ENCODE measurements at regions of chr19 and their contacts with region 1.

Region 1: DNA sequence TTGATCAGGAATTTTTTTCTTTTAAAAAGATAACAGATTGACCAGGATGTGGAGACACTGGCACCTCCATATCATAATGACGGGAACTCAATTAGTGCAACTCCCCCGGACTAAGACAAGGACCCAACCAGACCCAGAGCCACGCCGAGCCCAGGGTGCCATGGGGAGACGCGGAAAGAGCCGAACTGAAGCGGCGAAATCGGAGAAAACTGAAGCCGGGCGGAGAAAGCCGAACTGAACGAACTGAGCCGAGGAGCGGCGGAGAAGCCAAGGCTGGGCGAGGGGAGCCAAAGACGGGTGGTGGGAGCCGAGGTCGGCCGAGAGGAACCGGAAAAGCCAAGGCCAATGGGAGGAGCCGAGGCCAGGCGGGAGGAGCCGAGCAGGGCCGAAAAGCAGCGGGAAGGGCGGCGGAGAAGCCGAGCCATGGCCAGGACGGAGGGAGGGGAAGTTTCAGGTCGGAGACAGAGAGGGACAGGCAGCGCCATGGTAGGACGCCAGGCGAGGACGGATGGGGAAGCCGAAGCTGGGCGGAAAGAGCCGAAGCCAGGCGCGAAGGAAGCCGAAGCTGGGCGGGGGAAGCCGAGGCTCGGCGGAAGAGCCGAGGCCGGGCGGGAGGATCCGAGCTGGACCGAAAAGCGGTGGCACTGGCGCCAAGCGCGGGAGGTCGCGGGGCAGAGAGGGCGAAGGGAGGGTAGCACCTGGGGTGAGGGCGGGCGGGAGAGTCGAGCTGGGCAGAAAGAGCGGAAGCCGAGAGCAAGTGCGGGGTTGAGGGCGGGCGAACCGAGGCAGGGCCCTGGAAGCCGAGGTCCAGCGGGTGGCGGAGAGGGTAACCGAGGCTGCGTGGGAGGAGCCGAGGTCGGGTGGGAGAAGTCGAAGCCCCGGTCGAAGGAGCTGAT is 29.4 kb downstream of the ZNF557 start:
- DNase-seq: peak; percentile 82 to 92 (median 87)
- H3K4me3 ChIP-seq: peak overlapping the region; percentile 57 to 86
- H3K4me3 Mint-ChIP-seq: peak overlapping the region; percentile 84 to 96 (median 92)
- H3K27ac ChIP-seq: peak overlapping the region; percentile 86
- H3K27ac Mint-ChIP-seq: peak overlapping the region; percentile 74 to 98 (median 94)
- H3K4me1 ChIP-seq: peaks cover 23% of the 10 kb centered on the region
- H3K4me1 Mint-ChIP-seq: peaks cover 13 to 40% (median 27%) of the 10 kb centered on the region in 4 donors
- H3K27me3 ChIP-seq: no peaks in the 10 kb centered on the region
- H3K27me3 Mint-ChIP-seq: peaks cover 0 to 3% of the 10 kb centered on the region in 2 donors

Region 2: GRCh38 chr19:7069042-7069903 is 29.7 kb before region 1 on chr19 and contains the start of gene ZNF557:
- CTCF ChIA-PET with region 1: interaction called, 12 read pairs
- POLR2A ChIA-PET with region 1: interaction called, 31 read pairs
- intact Hi-C with region 1: loop called (anchors 1 kb)
- DNase-seq: peak; percentile 99 to 100 (median 99)
- H3K4me3 ChIP-seq: peak within 1 kb of the TSS; percentile 92 to 96
- H3K4me3 Mint-ChIP-seq: peak within 1 kb of the TSS; percentile 92 to 99 (median 96)
- H3K27ac ChIP-seq: peak within 1 kb of the TSS; percentile 74
- H3K27ac Mint-ChIP-seq: peak within 1 kb of the TSS; percentile 89 to 98 (median 95)
- H3K4me1 ChIP-seq: peaks cover 21% of the 10 kb centered on the region
- H3K4me1 Mint-ChIP-seq: peaks cover 11 to 36% (median 18%) of the 10 kb centered on the region in 4 donors
- H3K27me3 ChIP-seq: no peaks in the 10 kb centered on the region
- H3K27me3 Mint-ChIP-seq: no peaks in the 10 kb centered on the region
- total RNA-seq, gene ZNF557: 32.3 to 33.2 TPM

Region 3: GRCh38 chr19:7083076-7083956 is 15.6 kb before region 1 on chr19:
- CTCF ChIA-PET with region 1: interaction called, 4 read pairs
- POLR2A ChIA-PET with region 1: interaction called, 10 read pairs
- intact Hi-C with region 1: no loop called
- DNase-seq: peak in 2 of 5 donors; percentile 10 to 16
- H3K4me3 ChIP-seq: no peak overlapping the region
- H3K4me3 Mint-ChIP-seq: peak overlapping the region in 2 of 8 donors; percentile 5 to 35
- H3K27ac ChIP-seq: no peak overlapping the region
- H3K27ac Mint-ChIP-seq: peak overlapping the region in 1 of 7 donors; percentile 21
- H3K4me1 ChIP-seq: no peaks in the 10 kb centered on the region
- H3K4me1 Mint-ChIP-seq: peaks cover 0 to 1% (median 0%) of the 10 kb centered on the region in 4 donors
- H3K27me3 ChIP-seq: no peaks in the 10 kb centered on the region
- H3K27me3 Mint-ChIP-seq: no peaks in the 10 kb centered on the region

Region 4: GRCh38 chr19:7326105-7326877 is 227.3 kb after region 1 on chr19:
- CTCF ChIA-PET with region 1: interaction called, 5 read pairs
- POLR2A ChIA-PET with region 1: no interaction called
- intact Hi-C with region 1: loop called (anchors 1 kb)
- DNase-seq: peak in 2 of 5 donors; percentile 24 to 37
- H3K4me3 ChIP-seq: no peak overlapping the region
- H3K4me3 Mint-ChIP-seq: no peak overlapping the region
- H3K27ac ChIP-seq: no peak overlapping the region
- H3K27ac Mint-ChIP-seq: no peak overlapping the region
- H3K4me1 ChIP-seq: no peaks in the 10 kb centered on the region
- H3K4me1 Mint-ChIP-seq: no peaks in the 10 kb centered on the region
- H3K27me3 ChIP-seq: no peaks in the 10 kb centered on the region
- H3K27me3 Mint-ChIP-seq: peaks cover 1 to 2% of the 10 kb centered on the region in 2 donors

Region 5: DNA sequence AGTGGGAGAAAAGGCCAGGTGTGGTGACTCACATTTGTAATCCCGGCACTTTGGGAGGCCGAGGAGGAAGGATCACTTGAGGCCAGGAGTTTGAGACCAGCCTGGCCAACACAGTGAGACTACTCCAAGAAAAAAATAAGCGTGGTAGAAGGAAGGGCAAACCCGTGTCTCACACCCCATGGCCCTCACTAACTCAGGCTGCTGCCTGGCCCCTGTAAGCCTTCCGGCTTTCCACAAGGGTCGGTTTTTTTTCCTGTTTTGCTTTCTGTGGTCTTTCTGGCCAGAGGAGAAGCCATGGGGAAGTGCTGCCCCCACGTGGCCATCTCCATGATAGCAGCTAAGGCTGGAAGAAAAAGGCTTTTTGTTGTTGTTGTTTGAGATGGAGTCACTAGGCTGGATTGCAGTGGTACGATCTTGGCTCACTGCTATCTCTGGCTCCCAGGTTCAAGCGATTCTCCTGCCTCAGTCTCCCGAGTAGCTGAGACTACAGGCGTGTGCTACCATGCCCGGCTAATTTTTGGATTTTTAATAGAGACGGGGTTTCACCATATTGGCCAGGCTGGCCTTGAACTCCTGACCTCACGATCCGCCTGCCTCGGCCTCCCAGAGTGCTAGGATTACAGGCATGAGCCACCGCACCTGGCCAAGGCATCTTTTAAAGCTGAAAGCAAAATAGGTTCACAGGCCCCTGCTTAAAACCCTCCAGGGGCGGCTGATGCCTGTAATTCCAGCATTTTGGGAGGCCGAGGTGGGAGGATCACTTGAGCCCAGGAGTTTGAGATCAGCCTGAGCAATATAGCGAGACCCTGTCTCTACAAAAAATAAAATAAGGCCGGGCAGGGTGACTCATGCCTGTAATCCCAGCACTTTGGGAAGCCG is 242.2 kb after region 1 on chr19:
- CTCF ChIA-PET with region 1: interaction called, 21 read pairs
- POLR2A ChIA-PET with region 1: interaction called, 10 read pairs
- intact Hi-C with region 1: loop called (anchors 2 kb)
- DNase-seq: peak; percentile 70 to 81 (median 79)
- H3K4me3 ChIP-seq: no peak overlapping the region
- H3K4me3 Mint-ChIP-seq: peak overlapping the region in 6 of 8 donors; percentile 17 to 72 (median 66)
- H3K27ac ChIP-seq: no peak overlapping the region
- H3K27ac Mint-ChIP-seq: peak overlapping the region; percentile 54 to 92 (median 85)
- H3K4me1 ChIP-seq: peaks cover 67% of the 10 kb centered on the region
- H3K4me1 Mint-ChIP-seq: peaks cover 44 to 65% (median 50%) of the 10 kb centered on the region in 4 donors
- H3K27me3 ChIP-seq: no peaks in the 10 kb centered on the region
- H3K27me3 Mint-ChIP-seq: no peaks in the 10 kb centered on the region

Region 6: DNA sequence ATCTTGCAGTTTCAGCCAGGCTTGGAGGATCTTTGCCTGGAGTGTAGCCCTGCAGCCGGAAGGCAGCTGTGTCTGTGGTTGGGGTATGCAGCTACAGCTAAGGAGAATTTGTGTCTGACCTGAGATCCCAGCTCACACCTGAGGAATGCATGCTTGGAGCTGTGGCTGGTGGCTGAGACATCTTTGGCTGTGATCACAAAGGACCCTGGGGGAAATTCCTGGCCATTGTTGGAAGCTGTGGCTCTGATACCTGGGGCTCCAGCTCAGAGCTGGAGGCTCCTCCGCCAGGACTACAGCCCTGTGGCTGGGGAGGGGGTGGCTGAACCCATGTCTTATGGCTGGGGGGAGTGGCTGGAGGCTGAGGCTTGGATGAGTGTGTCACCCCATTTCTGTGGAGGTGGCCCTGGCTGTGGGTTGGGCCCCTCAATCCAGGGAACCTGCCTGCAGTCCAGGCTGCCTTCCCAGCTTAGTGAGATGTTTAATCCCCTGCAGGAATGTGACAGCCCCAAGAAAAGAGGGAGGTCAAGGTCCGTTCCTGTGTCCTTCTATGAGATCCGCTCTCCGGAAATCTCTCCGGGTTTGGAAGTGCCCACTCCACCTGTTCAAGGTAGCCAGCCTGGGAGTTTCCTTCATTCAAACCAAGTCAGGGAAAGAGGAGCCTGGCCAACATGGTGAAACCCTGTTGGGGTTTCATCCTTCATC is 277.4 kb after region 1 on chr19:
- CTCF ChIA-PET with region 1: interaction called, 3 read pairs
- POLR2A ChIA-PET with region 1: no interaction called
- intact Hi-C with region 1: loop called (anchors 1 kb)
- DNase-seq: no peak
- H3K4me3 ChIP-seq: no peak overlapping the region
- H3K4me3 Mint-ChIP-seq: no peak overlapping the region
- H3K27ac ChIP-seq: no peak overlapping the region
- H3K27ac Mint-ChIP-seq: peak overlapping the region in 1 of 7 donors; percentile 64
- H3K4me1 ChIP-seq: peaks cover 4% of the 10 kb centered on the region
- H3K4me1 Mint-ChIP-seq: peaks cover 6 to 24% (median 7%) of the 10 kb centered on the region in 4 donors
- H3K27me3 ChIP-seq: no peaks in the 10 kb centered on the region
- H3K27me3 Mint-ChIP-seq: no peaks in the 10 kb centered on the region